ENCODE measurements at regions of chr2 and their contacts with region 1.

Region 1: DNA sequence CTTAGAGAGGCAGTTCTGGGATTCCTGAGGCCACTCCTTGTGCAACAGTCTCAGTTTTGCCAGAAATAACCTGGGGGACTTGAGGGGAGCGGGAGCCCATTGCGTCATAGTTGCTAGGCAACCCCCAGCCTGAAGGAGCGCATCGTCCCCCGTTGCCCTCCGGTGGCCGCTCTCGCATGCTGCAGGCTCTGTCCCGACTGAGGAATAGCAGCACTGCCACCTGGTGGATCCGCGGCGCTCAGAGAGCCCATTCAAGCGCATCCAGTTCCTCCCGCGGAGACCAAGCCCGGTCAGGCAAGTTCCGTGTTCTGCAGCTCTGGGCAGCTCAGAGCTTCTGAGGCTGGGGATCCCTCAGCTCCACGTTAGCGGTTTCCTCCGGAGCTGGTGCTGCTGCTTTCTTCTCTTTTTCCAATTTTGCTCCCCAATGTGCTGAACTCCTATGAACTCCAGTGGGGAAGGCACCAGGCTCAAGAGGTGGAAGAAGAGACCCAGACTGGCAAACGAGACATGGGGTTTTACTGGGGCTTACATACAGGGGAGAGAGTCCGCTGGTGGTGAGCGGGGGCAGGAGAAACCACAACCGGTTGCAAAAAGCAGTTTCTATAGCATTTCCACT is 15.1 kb downstream of the SLC4A3 start:
- DNase-seq: peak; percentile 98 to 99 (median 99)
- ATAC-seq: peak; percentile 72 to 73
- H3K4me3 ChIP-seq: no peak overlapping the region
- H3K27ac ChIP-seq: peak overlapping the region; percentile 96
- H3K4me1 ChIP-seq: peaks cover 2% of the 10 kb centered on the region
- H3K27me3 ChIP-seq: no peaks in the 10 kb centered on the region

Region 2: GRCh38 chr2:219160186-219161017 is 482.2 kb before region 1 on chr2 and contains the start of gene NHEJ1:
- intact Hi-C with region 1: no loop called
- DNase-seq: peak; percentile 97 to 99 (median 99)
- ATAC-seq: peak; percentile 98 to 99
- H3K4me3 ChIP-seq: peak within 1 kb of the TSS; percentile 61
- H3K27ac ChIP-seq: peak within 1 kb of the TSS; percentile 98
- H3K4me1 ChIP-seq: peaks cover 3% of the 10 kb centered on the region
- H3K27me3 ChIP-seq: no peaks in the 10 kb centered on the region
- total RNA-seq, gene NHEJ1: 5.4 to 9.4 (median 9.2) TPM

Region 3: GRCh38 chr2:219543601-219544358 is 98.8 kb before region 1 on chr2 and contains the starts of genes CHPF and TMEM198:
- intact Hi-C with region 1: loop called in 3 of 4 experiments (anchors 5 kb)
- DNase-seq: peak; percentile 99 to 100 (median 99)
- ATAC-seq: peak; percentile 93 to 95
- H3K4me3 ChIP-seq: peak within 1 kb of the TSS; percentile 81
- H3K27ac ChIP-seq: peak within 1 kb of the TSS; percentile 71
- H3K4me1 ChIP-seq: no peaks in the 10 kb centered on the region
- H3K27me3 ChIP-seq: no peaks in the 10 kb centered on the region
- total RNA-seq, gene CHPF: 92.6 to 145 (median 101) TPM
- total RNA-seq, gene TMEM198: 1.8 to 3.4 (median 3.1) TPM

Region 4: DNA sequence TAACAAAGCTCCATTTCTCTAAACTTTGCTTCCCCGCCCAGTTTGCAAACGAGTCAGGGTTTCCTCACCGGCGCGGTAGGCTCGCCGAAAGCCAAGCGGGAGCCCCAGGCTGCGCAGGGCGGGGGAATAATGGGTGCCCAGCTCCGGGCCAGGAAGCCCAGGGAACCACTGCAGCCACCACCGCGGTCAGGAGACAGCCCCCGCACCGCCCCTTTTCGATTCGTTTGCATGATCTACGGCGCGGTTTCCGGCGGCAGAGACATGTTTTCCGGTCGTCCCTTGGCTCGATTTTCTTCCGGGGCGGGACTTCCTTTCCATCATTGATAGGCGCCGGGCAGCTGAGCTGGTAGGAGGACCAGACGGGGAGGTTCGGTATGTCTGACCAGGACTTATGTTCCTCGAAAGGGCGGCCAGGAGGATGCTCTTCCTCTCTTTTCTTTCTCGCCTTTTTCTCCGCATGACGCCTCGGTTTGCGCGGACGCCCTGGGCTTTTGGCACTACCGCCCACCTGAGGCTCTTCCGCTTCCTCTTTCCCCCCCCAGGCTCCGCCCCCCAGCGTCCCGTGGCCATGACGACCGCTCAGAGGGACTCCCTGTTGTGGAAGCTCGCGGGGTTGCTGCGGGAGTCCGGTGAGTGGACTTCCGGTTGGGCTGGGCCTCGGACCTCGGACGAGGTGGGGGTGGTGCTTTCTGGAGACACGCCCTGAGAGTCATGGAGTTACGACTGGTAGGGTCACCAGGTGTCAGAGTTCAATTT is 44.8 kb before region 1 on chr2 and contains the start of gene STK11IP:
- intact Hi-C with region 1: loop called in 1 of 4 experiments (anchors 5 kb)
- DNase-seq: peak; percentile 97 to 99 (median 98)
- ATAC-seq: peak; percentile 98
- H3K4me3 ChIP-seq: peak within 1 kb of the TSS; percentile 69
- H3K27ac ChIP-seq: peak within 1 kb of the TSS; percentile 87
- H3K4me1 ChIP-seq: no peaks in the 10 kb centered on the region
- H3K27me3 ChIP-seq: no peaks in the 10 kb centered on the region
- total RNA-seq, gene STK11IP: 12.1 to 19.0 (median 15.1) TPM

Measured in right cardiac atrium (tissue), 5 donors.